Ovary (tissue), 10 donors: ENCODE measurements at regions of chr20 and their contacts with region 1.

Region 1: DNA sequence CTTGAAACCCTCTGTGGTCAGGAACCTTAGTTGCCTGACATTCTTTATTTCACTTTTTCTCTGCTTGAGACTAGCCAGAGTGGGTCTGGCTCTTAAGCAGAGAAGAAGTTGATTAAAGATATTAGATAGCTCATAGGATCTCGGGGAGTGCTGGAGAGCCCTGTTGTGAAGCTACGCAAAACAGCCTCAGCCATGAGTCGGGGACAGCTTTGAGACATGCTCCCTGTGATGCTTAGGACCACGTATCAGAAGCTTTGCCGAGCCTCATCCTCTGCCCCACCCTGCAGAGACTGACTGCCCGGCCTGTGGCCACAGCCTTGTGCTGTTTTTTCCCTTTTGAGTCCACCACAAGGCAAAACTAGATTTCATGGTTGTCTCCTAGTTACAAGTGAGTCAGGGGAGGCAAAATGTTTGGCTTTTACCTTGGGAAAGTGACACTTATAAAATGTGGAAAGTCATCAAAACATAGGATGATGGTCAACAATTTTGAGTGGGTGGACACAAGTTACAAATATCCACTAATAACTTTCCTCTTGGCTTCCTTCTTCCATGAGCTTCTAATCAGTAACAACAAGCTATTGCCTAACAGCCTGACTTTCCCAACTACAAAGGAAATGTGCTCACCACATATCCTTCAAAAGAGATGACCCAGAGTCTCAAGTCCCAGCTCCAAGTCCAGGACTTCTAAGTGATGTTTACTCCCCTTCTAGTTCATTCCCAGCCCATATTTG is 108.4 kb downstream of the JAG1 start:
- DNase-seq: peak in 1 of 5 donors; percentile 31
- H3K4me3 ChIP-seq: no peak overlapping the region
- H3K27ac ChIP-seq: no peak overlapping the region
- H3K4me1 ChIP-seq: peaks cover 3% of the 10 kb centered on the region
- H3K27me3 ChIP-seq: no peaks in the 10 kb centered on the region
- CTCF ChIP-seq: no peak
- EP300 ChIP-seq: no peak
- POLR2A ChIP-seq: no peak

Region 2: DNA sequence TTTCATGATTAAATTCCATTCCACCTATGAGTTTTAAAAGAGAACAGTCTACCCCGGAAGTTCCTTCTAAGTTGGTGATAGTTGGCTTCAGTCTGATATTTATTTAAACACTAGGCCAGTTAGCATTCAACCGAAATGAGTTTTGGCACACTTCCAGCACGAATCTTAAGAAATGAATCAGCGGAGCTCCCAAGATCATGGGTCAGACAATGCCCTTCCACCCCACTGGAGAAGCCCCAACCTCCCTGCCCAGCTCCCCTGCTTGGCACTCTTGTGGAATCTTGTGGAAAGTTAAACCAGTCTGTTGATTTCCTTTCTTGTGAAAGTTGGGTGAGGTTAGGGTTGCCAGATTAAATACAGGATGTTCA is 195.6 kb before region 1 on chr20:
- intact Hi-C with region 1: no loop called
- DNase-seq: peak in 1 of 5 donors; percentile 8
- H3K4me3 ChIP-seq: no peak overlapping the region
- H3K27ac ChIP-seq: no peak overlapping the region
- H3K4me1 ChIP-seq: peaks cover 2% of the 10 kb centered on the region
- H3K27me3 ChIP-seq: no peaks in the 10 kb centered on the region
- CTCF ChIP-seq: no peak
- EP300 ChIP-seq: no peak
- POLR2A ChIP-seq: no peak

Region 3: DNA sequence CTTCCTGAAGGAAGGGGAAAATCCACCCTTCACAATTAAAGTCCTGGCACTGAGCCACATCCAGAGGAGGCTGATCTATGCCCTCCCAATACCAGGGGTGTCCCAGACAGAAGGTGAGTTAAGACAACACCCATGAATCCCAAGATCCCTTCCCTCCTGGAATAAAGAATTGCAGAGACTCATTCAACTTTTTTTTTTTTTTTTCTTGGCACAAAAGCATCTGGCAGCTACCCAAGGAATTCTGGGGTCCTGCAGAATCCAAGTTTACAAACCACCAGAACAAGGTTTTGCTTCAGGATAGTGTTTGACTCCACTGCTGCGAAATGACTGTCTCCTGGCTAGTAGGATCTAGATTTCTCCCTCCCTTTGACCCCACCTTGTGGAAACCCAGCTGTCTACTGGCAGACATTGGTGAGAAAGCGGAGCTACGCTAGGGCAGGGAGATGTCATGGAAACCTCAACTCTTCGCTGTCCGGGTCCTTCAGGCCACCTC is 71.0 kb after region 1 on chr20:
- intact Hi-C with region 1: loop called in 1 of 4 experiments (anchors 5 kb)
- DNase-seq: peak in 1 of 5 donors; percentile 28
- H3K4me3 ChIP-seq: no peak overlapping the region
- H3K27ac ChIP-seq: peak overlapping the region in 1 of 2 donors; percentile 25
- H3K4me1 ChIP-seq: peaks cover 19% of the 10 kb centered on the region
- H3K27me3 ChIP-seq: no peaks in the 10 kb centered on the region
- CTCF ChIP-seq: no peak
- EP300 ChIP-seq: no peak
- POLR2A ChIP-seq: no peak

Region 4: GRCh38 chr20:10761232-10761631 is 195.9 kb after region 1 on chr20:
- intact Hi-C with region 1: no loop called
- DNase-seq: no peak
- H3K4me3 ChIP-seq: no peak overlapping the region
- H3K27ac ChIP-seq: no peak overlapping the region
- H3K4me1 ChIP-seq: no peaks in the 10 kb centered on the region
- H3K27me3 ChIP-seq: no peaks in the 10 kb centered on the region
- CTCF ChIP-seq: no peak
- EP300 ChIP-seq: no peak
- POLR2A ChIP-seq: no peak